Posterior vena cava (tissue), 2 donors: ENCODE measurements at regions of chr13 and their contacts with region 1.

Region 1: GRCh38 chr13:38473305-38473704 is 123.7 kb downstream of the UFM1 start:
- DNase-seq: no peak

Region 2: DNA sequence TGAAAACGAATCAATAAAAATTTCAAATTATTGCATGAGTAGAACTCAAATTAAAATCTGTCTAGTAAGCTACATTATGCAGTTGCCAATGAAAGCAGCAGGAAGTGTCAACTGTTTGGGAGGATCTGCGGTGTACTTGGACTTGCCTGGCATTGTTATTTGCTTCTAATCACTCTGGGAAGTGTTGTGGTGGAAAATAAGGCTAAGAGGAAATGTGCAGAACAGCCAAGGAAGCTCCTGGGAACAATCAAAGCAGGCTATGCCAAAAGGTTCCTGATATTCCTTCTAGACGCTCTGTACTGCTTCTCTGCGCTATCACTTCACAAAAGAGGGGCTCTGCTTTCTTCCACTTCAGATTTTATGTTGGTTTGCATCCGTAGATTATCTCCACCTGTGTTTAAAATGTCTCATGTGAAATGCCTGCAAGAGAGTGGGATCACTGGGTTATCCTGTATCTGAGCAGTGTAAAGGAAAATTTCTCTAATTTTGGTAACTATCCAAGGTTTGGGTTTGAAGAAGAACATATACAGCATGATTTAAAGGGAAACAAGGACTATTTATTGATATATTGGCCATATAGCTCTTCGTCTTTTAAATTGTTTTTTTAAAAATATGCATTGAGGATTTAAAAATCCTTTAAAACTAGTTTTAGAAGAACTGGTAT is 1185.1 kb before region 1 on chr13:
- intact Hi-C with region 1: loop called in 1 of 2 experiments (anchors 10 kb)
- DNase-seq: no peak

Region 3: GRCh38 chr13:38417727-38418126 is 55.6 kb before region 1 on chr13:
- intact Hi-C with region 1: no loop called
- DNase-seq: no peak

Region 4: GRCh38 chr13:38518328-38518727 is 45.0 kb after region 1 on chr13:
- intact Hi-C with region 1: loop called in 1 of 2 experiments (anchors 1 kb)
- DNase-seq: no peak